ENCODE measurements at regions of chr17 and their contacts with region 1.

Region 1: GRCh38 chr17:40362696-40363110 is 1.8 kb downstream of the GJD3 start:
- DNase-seq: no peak
- H3K4me3 ChIP-seq: peak overlapping the region; percentile 59
- CTCF ChIP-seq: peak; percentile 92

Region 2: DNA sequence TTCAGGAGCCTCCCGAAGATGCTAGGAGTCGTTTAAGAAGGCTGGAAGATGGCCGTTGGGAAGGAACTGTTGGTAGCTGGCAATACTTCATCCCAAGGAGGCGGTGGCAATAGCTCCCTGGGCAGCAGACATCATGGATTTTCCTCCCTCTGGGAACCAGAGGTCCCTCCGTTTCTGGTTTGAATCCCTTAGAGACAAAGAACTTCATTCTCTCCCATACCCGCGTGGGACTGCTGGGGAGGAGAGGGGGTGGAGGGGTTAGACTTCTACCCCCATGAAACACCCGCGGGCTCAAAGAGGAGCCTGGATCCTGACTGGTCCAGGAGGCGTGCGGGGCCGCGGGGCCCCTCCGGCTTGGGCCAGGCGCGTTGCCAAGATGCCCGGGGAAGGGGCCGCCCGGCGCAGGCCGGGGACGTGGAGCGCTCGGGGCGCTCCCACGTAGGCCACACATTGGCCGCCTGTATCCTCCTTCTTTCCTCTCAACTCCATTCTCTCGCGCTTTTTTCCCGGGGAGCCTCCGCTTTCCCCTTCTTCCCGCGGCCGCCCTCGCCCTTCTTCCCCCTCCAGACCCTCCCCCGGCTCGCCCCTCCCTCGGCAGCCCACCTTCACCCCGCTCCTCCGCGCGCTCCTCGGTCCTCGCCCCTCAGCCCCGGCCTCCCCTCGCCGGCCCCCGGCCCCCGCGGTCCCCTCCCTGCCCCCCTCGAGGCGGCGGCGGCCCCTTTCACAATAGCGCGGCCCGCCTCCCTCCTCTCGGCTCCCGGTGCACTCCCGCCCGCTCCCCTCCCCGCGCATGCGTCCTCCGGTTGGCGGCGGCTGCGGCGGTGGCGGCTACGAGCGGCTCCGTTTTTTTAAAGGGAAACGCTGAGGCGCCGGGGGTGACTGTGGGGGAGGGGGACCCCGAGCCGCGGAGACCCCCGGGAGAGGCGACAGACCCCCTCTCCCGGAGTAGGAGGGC is 241.2 kb before region 1 on chr17 and contains the start of gene MSL1:
- CTCF ChIA-PET with region 1: no interaction called
- POLR2A ChIA-PET with region 1: no interaction called
- DNase-seq: no peak
- H3K4me3 ChIP-seq: peak within 1 kb of the TSS; percentile 92
- CTCF ChIP-seq: no peak

Region 3: GRCh38 chr17:40317880-40318829 is 44.5 kb before region 1 on chr17:
- CTCF ChIA-PET with region 1: interaction called, 649 read pairs
- POLR2A ChIA-PET with region 1: no interaction called
- DNase-seq: peak; percentile 84
- H3K4me3 ChIP-seq: peak overlapping the region; percentile 92
- CTCF ChIP-seq: no peak

Region 4: GRCh38 chr17:40349920-40350909 is 12.5 kb before region 1 on chr17:
- CTCF ChIA-PET with region 1: interaction called, 20 read pairs
- POLR2A ChIA-PET with region 1: no interaction called
- DNase-seq: no peak
- H3K4me3 ChIP-seq: no peak overlapping the region
- CTCF ChIP-seq: no peak

Region 5: DNA sequence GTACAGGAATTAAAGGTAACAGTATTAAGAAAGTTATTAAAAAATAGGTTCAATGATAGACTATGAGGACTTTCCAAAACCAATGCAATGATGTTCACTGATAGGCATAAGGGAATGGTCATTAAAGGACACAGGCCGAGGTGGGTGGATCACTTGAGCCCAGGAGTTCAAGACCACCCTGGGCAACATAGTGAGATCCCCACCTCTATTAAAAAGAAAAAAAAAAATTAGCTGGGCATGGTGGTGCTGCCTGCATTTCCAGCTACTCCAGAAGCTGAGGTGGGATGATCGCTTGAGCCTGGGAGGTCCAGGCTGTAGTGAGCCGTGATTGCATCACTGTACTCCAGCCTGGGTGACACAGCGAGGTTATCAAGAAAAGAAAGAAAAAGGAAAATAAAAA is 49.1 kb after region 1 on chr17:
- CTCF ChIA-PET with region 1: interaction called, 54 read pairs
- POLR2A ChIA-PET with region 1: no interaction called
- DNase-seq: no peak
- H3K4me3 ChIP-seq: no peak overlapping the region
- CTCF ChIP-seq: no peak

Region 6: GRCh38 chr17:40457964-40458791 is 95.5 kb after region 1 on chr17:
- CTCF ChIA-PET with region 1: no interaction called
- POLR2A ChIA-PET with region 1: no interaction called
- DNase-seq: peak; percentile 63
- H3K4me3 ChIP-seq: no peak overlapping the region
- CTCF ChIP-seq: no peak

Region 7: DNA sequence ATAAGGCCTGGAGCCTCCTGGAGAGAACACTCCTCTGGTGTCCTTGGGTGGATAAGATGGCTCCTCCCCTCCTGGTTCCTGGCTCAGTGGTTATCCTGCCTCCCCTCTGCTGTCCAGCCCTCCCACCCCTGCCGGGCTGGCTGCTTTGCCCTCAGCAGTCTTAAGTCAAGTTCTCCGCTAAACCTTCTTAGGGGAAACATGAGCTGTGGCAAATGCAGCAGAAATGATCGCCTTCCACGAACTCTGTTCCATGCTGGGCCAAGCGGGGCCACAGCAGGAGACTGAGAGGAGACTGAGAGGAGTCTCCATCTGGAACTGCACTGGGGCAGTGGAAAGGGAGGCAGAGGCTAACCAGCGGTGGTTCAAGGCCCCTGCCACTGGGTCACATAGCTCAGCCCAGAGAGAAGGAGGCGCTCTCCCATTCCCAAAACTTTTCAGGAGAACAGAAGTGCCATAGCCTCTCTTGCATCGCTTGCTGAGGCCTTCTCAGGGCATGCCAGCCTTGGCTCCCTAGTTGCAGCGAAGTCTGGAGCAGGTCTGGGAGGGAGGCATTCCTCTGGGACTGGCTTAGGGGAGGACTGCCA is 111.8 kb after region 1 on chr17:
- CTCF ChIA-PET with region 1: interaction called, 15 read pairs
- POLR2A ChIA-PET with region 1: no interaction called
- DNase-seq: no peak
- H3K4me3 ChIP-seq: no peak overlapping the region
- CTCF ChIP-seq: no peak

Measured in AG04449 (cell line).